Right cardiac atrium (tissue), 5 donors: ENCODE measurements at regions of chr2 and their contacts with region 1.

Region 1: GRCh38 chr2:19863303-19864041 is 38.3 kb downstream of the TTC32 start:
- DNase-seq: peak; percentile 69 to 89 (median 88)
- ATAC-seq: peak; percentile 86 to 87
- H3K4me3 ChIP-seq: no peak overlapping the region
- H3K27ac ChIP-seq: no peak overlapping the region
- H3K4me1 ChIP-seq: no peaks in the 10 kb centered on the region
- H3K27me3 ChIP-seq: no peaks in the 10 kb centered on the region

Region 2: GRCh38 chr2:18398833-18399232 is 1464.6 kb before region 1 on chr2:
- intact Hi-C with region 1: loop called in 2 of 4 experiments (anchors 10 kb)
- DNase-seq: no peak
- ATAC-seq: no peak
- H3K4me3 ChIP-seq: no peak overlapping the region
- H3K27ac ChIP-seq: no peak overlapping the region
- H3K4me1 ChIP-seq: no peaks in the 10 kb centered on the region
- H3K27me3 ChIP-seq: no peaks in the 10 kb centered on the region

Region 3: GRCh38 chr2:18520451-18521425 is 1342.7 kb before region 1 on chr2:
- intact Hi-C with region 1: loop called in 3 of 4 experiments (anchors 5 to 10 kb)
- DNase-seq: peak; percentile 86 to 95 (median 93)
- ATAC-seq: peak; percentile 84 to 89
- H3K4me3 ChIP-seq: no peak overlapping the region
- H3K27ac ChIP-seq: peak overlapping the region; percentile 84
- H3K4me1 ChIP-seq: no peaks in the 10 kb centered on the region
- H3K27me3 ChIP-seq: no peaks in the 10 kb centered on the region

Region 4: DNA sequence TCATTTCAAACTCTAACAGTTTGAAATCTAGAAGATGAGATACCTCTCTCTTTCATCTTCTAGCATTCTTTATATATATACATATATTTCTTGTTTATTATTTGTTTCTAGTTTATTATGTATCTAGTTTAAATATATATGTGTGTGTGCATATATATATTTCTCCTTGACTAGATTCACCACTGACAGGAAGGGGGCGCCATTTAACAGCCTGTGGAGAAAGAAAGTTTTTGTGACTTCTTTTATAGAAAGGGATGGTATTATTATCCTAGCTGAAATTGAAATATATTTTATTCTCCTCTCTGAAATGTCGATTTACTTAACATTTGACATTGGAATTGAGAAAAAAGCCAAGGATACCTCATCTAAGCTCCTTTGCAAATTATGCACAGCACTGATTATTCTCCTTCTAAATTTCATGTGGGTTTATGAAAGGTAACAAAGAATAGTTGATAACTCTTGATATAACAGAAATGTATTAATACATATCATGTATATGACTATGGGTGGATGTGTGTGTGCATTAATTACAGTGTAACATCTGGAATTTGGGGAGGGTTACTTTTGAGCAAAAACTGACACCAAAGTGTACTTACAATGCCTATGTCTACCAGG is 1113.5 kb before region 1 on chr2:
- intact Hi-C with region 1: loop called in 2 of 4 experiments (anchors 5 to 10 kb)
- DNase-seq: peak in 2 of 3 donors; percentile 47 to 56
- ATAC-seq: no peak
- H3K4me3 ChIP-seq: no peak overlapping the region
- H3K27ac ChIP-seq: no peak overlapping the region
- H3K4me1 ChIP-seq: no peaks in the 10 kb centered on the region
- H3K27me3 ChIP-seq: no peaks in the 10 kb centered on the region

Region 5: DNA sequence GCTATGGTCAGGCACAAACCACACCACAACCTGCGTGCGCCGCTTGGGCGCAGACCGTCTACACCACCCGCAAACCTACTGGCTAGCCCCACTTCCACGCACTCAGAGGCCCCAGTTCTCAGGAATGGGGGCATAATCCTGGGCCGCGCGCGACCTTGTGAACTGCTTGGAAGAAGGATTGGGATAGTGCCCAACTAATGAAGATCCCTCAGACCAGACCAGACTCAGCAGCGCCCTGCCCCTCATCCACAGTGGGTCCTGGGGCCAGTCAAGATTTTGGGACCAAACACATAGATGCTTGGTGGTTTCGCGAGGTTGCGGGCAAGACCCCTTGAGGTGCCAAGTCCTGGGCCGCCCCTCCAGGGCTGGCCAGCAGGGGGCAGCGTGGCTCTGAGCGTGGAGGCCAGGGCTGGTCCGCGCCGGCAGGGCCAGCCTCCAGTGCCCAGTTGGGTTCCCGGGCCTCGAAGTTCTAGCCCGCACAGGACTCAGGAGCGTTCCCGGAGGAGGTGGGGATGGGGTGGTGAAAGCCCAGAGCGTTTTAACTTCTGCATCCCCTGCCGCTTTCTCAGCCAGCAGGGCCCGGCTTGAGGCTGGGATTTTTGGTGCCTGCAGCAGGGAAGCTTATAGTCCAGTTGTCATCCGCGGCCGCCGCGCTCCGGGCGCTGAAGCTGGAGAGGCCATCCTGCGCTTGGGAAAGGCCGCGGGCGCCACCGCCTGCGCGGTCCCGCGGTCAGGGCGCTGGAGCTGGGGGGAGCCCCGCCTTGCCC is 513.4 kb before region 1 on chr2:
- intact Hi-C with region 1: loop called in 1 of 4 experiments (anchors 5 kb)
- DNase-seq: peak; percentile 63 to 86 (median 84)
- ATAC-seq: peak; percentile 30 to 48
- H3K4me3 ChIP-seq: peak overlapping the region; percentile 7
- H3K27ac ChIP-seq: no peak overlapping the region
- H3K4me1 ChIP-seq: peaks cover 9% of the 10 kb centered on the region
- H3K27me3 ChIP-seq: no peaks in the 10 kb centered on the region

Region 6: GRCh38 chr2:19955544-19956422 is 92.3 kb after region 1 on chr2:
- intact Hi-C with region 1: no loop called
- DNase-seq: peak; percentile 28 to 66 (median 59)
- ATAC-seq: peak; percentile 87
- H3K4me3 ChIP-seq: no peak overlapping the region
- H3K27ac ChIP-seq: no peak overlapping the region
- H3K4me1 ChIP-seq: no peaks in the 10 kb centered on the region
- H3K27me3 ChIP-seq: no peaks in the 10 kb centered on the region